ENCODE measurements at regions of chr10 and their contacts with region 1.

Region 1: GRCh38 chr10:76998451-76998850 is 639.2 kb downstream of the KCNMA1 start:
- DNase-seq: no peak
- CTCF ChIP-seq: no peak

Region 2: GRCh38 chr10:76984559-76985443 is 13.7 kb before region 1 on chr10:
- CTCF ChIA-PET with region 1: interaction called, 10 read pairs
- POLR2A ChIA-PET with region 1: no interaction called
- DNase-seq: peak; percentile 41
- CTCF ChIP-seq: peak; percentile 94